MCF 10A (cell line): ENCODE measurements at regions of chr5 and their contacts with region 1.

Region 1: DNA sequence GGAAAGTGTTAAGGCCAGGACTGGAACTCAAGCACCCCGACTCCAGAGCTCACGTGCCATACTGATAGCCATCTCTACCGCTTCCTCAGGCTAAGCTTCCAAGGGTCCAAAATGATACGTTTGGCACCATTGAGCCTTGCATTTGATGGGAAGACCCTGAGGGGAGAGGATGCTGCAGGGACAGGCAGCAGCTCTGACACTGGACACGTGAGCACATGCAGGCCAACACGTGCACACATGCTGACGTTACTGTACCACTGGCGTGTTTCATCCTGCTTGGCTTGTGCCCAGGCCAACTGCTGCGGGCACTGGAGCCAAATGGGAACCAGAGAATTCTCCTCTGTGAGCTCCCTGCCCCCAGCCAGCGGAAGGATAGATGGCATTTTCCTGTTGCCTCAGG is 5.2 kb downstream of the FAT2 start:
- DNase-seq: peak; percentile 95
- H3K4me3 Mint-ChIP-seq: no peak overlapping the region
- H3K27ac Mint-ChIP-seq: peak overlapping the region; percentile 81
- H3K4me1 Mint-ChIP-seq: peaks cover 58% of the 10 kb centered on the region
- H3K27me3 Mint-ChIP-seq: no peaks in the 10 kb centered on the region
- CTCF ChIP-seq: no peak

Region 2: GRCh38 chr5:151574444-151574996 is 11.4 kb before region 1 on chr5:
- CTCF ChIA-PET with region 1: interaction called, 41 read pairs
- POLR2A ChIA-PET with region 1: interaction called, 238 read pairs
- intact Hi-C with region 1: no loop called
- DNase-seq: peak; percentile 55
- H3K4me3 Mint-ChIP-seq: no peak overlapping the region
- H3K27ac Mint-ChIP-seq: peak overlapping the region; percentile 57
- H3K4me1 Mint-ChIP-seq: peaks cover 48% of the 10 kb centered on the region
- H3K27me3 Mint-ChIP-seq: no peaks in the 10 kb centered on the region
- CTCF ChIP-seq: no peak

Region 3: GRCh38 chr5:151628112-151628823 is 42.3 kb after region 1 on chr5:
- CTCF ChIA-PET with region 1: interaction called, 4 read pairs
- POLR2A ChIA-PET with region 1: interaction called, 402 read pairs
- intact Hi-C with region 1: no loop called
- DNase-seq: peak; percentile 99
- H3K4me3 Mint-ChIP-seq: no peak overlapping the region
- H3K27ac Mint-ChIP-seq: peak overlapping the region; percentile 50
- H3K4me1 Mint-ChIP-seq: peaks cover 53% of the 10 kb centered on the region
- H3K27me3 Mint-ChIP-seq: no peaks in the 10 kb centered on the region
- CTCF ChIP-seq: no peak